ENCODE measurements at regions of chr11 and their contacts with region 1.

Region 1: DNA sequence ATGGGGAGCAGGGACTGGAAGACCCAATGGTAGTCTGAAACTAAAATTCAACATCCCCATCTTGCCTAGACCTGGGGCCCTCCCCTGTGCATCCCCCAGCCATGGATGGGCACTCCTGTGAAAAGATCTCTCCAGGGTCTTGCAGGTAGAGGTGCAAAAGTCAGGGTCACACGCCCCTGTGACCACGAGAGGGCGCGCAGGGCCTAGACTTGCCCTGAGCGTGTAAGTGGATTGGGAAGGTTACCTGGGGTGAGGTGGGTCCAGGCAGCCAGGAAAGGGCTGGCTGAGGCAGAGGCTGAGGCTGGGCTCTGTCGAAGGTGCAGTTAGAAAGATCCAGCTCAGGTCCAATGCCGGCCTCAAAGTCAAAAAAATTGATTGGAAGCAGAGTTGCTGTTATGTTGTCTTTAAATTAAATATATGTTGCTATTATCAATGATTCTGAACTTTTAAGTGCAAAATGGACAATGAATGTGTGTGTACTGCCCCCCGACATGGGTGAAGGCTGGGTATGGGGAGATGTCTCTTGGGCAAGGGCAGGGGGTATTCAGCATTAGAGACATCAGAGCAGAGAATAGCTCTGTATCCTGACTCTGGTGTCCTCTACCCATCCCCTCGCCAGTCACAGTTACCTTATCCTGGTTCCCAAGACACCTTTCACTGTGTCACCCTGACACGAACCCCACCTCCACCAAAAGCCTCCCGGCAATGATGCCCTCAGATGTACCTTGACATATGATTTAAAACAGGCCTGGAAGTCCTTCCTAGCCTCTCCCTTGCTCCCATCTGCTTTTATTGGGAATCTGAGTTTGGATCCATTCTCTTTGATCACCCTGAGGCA is 4.7 kb upstream of the POU2F3 start:
- DNase-seq: peak in 2 of 4 donors; percentile 53 to 76
- ATAC-seq: peak; percentile 92
- H3K4me3 ChIP-seq: no peak overlapping the region
- H3K27ac ChIP-seq: no peak overlapping the region
- H3K4me1 ChIP-seq: no peaks in the 10 kb centered on the region
- H3K27me3 ChIP-seq: peaks cover 11 to 69% of the 10 kb centered on the region in 2 donors
- CTCF ChIP-seq: peak; percentile 41 to 57

Region 2: DNA sequence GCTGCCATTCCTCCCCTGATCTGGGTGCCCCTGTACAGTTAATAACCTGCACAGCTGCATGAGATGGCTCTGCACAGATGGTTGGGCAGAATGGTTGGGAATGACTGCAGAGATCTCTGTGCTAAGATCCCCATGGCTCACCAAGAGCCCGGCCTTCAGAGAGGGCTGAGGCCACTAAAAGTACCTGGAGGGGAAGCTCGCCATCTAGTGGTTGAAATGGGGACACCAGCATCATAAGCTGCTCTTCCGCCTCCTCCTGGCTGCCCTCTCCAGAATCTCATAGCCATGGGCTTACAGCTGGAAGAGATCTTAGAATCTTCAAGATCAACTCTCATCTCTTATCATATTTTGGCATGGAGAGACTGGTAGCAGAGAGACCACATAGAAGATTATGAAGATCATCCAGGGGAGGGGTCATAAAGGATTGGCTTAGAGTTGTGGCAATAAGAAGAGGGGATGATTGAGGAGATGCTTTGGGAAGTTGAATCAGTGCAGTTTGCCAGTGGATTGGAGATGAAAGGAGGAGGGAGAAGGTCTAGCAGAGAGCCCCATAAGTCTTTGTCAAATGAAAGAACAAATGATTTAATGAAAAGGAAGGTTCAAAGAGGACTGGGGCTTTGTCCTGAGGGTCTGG is 67.9 kb after region 1 on chr11:
- intact Hi-C with region 1: loop called in 1 of 2 experiments (anchors 5 kb)
- DNase-seq: peak in 2 of 4 donors; percentile 48 to 66
- ATAC-seq: peak; percentile 73
- H3K4me3 ChIP-seq: no peak overlapping the region
- H3K27ac ChIP-seq: no peak overlapping the region
- H3K4me1 ChIP-seq: peaks cover 3 to 5% of the 10 kb centered on the region in 2 donors
- H3K27me3 ChIP-seq: peaks cover 0 to 15% of the 10 kb centered on the region in 2 donors
- CTCF ChIP-seq: peak; percentile 86 to 87

Region 3: DNA sequence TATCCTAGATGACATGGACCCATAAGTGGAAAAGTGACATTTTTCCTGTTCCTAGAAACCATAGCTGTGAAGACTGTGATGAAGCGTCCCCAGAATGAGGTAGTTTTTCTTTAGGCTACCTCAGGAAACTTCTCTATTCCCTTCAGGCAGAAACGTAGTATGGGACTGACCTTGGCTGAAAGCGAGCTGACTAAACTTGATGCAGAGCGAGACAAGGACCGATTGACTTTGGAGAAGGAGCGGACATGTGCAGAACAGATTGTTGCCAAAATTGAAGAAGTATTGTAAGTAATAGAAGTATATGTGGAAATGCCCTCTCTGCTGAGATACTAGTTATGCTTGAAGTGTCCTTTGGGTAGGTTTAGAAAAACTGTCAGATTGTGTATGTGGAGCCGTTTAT is 211.6 kb after region 1 on chr11:
- intact Hi-C with region 1: no loop called
- DNase-seq: no peak
- ATAC-seq: no peak
- H3K4me3 ChIP-seq: no peak overlapping the region
- H3K27ac ChIP-seq: no peak overlapping the region
- H3K4me1 ChIP-seq: no peaks in the 10 kb centered on the region
- H3K27me3 ChIP-seq: no peaks in the 10 kb centered on the region
- CTCF ChIP-seq: no peak